ENCODE measurements at regions of chr21 and their contacts with region 1.

Region 1: GRCh38 chr21:17679002-17679600 is 66.4 kb upstream of the BTG3 start:
- DNase-seq: peak; percentile 15
- ATAC-seq: peak; percentile 87
- H3K4me3 Mint-ChIP-seq: no peak overlapping the region
- H3K27ac Mint-ChIP-seq: no peak overlapping the region
- H3K4me1 Mint-ChIP-seq: peaks cover 13% of the 10 kb centered on the region
- H3K27me3 Mint-ChIP-seq: no peaks in the 10 kb centered on the region
- CTCF ChIP-seq: peak; percentile 71

Region 2: DNA sequence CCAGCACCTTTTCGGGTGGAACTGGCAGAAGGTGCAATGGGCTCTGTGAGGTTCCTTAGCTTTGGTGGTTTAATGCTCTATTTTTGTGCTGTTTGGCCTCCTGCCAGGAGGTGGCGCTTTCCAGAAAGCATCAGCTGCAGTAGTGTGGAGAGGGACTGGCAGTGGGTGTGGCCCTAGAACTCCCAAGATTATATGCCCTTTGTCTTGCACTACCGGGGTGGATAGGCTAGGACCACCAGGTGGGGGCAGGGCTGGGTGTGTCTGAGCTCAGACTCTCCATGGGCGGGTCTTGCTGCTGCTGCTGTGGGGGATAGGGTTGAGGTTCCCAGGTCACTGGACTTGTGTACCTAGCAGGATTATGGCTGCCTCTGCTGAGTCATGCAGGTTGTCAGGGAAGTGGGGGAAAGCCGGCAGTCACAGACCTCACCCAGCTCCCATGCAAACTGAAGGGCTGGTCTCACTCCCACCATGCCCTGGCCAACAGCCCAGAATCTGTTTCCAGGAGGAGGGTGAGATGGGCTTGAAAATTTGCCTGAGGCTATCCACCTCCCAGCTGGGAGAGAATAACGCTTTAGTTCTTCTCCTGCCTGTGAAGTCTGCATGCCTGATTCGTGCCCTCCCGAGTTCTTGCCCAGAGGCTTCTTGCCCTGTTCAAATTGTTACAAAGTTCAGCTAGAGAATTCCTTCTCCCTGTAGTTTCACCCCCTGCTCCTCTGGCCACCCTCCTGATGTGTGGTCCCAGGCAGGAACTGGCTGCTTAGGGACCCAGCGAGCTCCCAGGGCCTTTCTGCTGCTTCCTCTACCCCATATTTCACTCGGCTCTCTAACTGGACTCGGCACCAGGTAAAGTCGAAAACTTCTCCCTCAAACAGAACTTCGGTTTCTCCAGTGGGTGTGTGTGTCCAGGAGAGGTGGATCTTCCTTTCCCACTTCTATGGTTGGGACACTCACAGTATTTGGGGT is 10.1 kb after region 1 on chr21:
- CTCF ChIA-PET with region 1: interaction called, 37 read pairs
- POLR2A ChIA-PET with region 1: no interaction called
- intact Hi-C with region 1: no loop called
- DNase-seq: peak; percentile 72
- ATAC-seq: peak; percentile 39
- H3K4me3 Mint-ChIP-seq: no peak overlapping the region
- H3K27ac Mint-ChIP-seq: peak overlapping the region; percentile 20
- H3K4me1 Mint-ChIP-seq: peaks cover 27% of the 10 kb centered on the region
- H3K27me3 Mint-ChIP-seq: no peaks in the 10 kb centered on the region
- CTCF ChIP-seq: peak; percentile 36

Region 3: DNA sequence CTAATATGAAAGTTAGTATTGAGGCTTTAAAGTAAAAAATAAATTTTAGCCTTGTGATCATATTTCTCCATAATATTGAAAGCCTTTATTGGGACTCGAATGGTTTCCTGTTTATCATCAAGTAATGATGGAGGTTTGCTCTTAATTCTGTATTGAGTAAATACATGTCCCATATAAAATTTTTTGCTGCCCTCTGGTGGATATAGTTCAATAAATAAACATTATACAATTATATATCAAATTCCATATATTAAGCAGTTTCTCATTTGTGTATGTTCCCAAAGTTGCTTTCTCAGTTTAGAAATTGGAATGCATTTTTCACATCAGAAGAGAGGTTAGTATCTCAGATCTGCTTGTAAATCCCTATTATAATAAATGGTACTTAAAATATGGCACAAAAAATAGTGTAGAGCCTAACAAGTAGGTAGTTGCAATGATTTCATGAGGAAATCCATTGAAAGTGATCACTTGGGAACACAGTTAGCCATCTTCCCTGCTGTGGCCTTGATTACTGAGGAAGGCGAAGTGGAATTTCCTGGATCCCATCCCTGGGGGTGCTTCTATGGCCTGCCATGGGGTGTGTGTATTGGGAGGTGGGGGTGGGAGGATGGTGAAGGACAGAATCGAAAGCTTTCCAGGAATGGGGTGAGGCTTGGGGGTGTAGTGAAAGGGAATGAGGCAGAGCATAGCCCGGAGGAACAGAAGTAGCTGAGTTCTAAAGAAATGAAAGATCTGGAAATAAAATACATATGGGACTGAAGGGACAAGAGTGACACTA is 224.1 kb after region 1 on chr21:
- CTCF ChIA-PET with region 1: interaction called, 33 read pairs
- POLR2A ChIA-PET with region 1: no interaction called
- intact Hi-C with region 1: loop called (anchors 1 kb)
- DNase-seq: no peak
- ATAC-seq: peak; percentile 55
- H3K4me3 Mint-ChIP-seq: no peak overlapping the region
- H3K27ac Mint-ChIP-seq: no peak overlapping the region
- H3K4me1 Mint-ChIP-seq: peaks cover 9% of the 10 kb centered on the region
- H3K27me3 Mint-ChIP-seq: no peaks in the 10 kb centered on the region
- CTCF ChIP-seq: peak; percentile 62